Caco-2 (cell line): ENCODE measurements at regions of chr7 and their contacts with region 1.

Region 1: DNA sequence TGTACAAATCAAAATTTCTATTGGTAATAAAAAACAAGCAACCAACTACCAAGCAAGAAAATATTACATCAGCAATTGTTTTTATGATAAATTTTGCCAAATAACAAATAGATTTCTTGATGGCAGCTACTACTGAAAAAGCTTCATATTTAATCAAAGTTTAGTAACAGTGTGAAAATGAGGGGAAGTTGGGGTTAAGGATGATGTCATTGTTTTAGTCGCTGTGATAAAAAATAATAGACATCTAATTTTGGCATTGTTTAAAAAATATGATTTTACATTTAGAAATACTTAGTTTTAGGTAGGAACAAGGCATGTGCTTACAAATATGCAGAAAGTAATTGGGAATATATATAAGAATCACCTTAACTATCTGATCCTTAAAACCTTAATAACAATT is 145.9 kb downstream of the CNTNAP2 start:
- DNase-seq: no peak
- H3K4me3 ChIP-seq: no peak overlapping the region
- H3K4me3 Mint-ChIP-seq: no peak overlapping the region
- H3K27ac Mint-ChIP-seq: no peak overlapping the region
- H3K4me1 ChIP-seq: no peaks in the 10 kb centered on the region
- H3K4me1 Mint-ChIP-seq: peaks cover 6% of the 10 kb centered on the region
- H3K27me3 ChIP-seq: no peaks in the 10 kb centered on the region
- H3K27me3 Mint-ChIP-seq: peaks cover 5% of the 10 kb centered on the region
- CTCF ChIP-seq: no peak

Region 2: GRCh38 chr7:146296028-146296427 is 33.5 kb after region 1 on chr7:
- CTCF ChIA-PET with region 1: no interaction called
- POLR2A ChIA-PET with region 1: interaction called, 10 read pairs
- intact Hi-C with region 1: no loop called
- DNase-seq: no peak
- H3K4me3 ChIP-seq: no peak overlapping the region
- H3K4me3 Mint-ChIP-seq: no peak overlapping the region
- H3K27ac Mint-ChIP-seq: no peak overlapping the region
- H3K4me1 ChIP-seq: no peaks in the 10 kb centered on the region
- H3K4me1 Mint-ChIP-seq: no peaks in the 10 kb centered on the region
- H3K27me3 ChIP-seq: no peaks in the 10 kb centered on the region
- H3K27me3 Mint-ChIP-seq: peaks cover 3% of the 10 kb centered on the region
- CTCF ChIP-seq: no peak

Region 3: GRCh38 chr7:146321301-146321700 is 58.8 kb after region 1 on chr7:
- CTCF ChIA-PET with region 1: no interaction called
- POLR2A ChIA-PET with region 1: no interaction called
- intact Hi-C with region 1: no loop called
- DNase-seq: no peak
- H3K4me3 ChIP-seq: no peak overlapping the region
- H3K4me3 Mint-ChIP-seq: no peak overlapping the region
- H3K27ac Mint-ChIP-seq: no peak overlapping the region
- H3K4me1 ChIP-seq: no peaks in the 10 kb centered on the region
- H3K4me1 Mint-ChIP-seq: no peaks in the 10 kb centered on the region
- H3K27me3 ChIP-seq: no peaks in the 10 kb centered on the region
- H3K27me3 Mint-ChIP-seq: no peaks in the 10 kb centered on the region
- CTCF ChIP-seq: no peak

Region 4: DNA sequence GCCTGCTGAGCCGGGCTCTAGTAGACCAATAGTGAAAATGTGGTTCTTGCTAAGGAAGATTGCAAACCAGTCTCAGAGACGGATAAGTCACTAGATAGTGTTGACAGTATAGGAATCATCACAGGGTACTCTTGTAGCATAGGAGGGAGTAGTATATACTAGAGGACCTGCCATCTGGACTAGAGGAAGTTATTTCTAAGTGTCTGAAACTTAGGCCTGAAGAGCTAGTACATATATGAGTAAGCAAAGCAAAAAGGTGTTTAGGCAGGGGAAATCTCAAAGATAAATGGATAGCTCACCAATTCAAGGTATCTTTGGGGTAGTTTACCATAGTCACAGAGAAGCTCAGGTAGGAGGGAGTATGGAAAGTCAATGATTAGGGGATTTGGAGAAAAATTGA is 282.2 kb after region 1 on chr7:
- CTCF ChIA-PET with region 1: no interaction called
- POLR2A ChIA-PET with region 1: no interaction called
- intact Hi-C with region 1: no loop called
- DNase-seq: no peak
- H3K4me3 ChIP-seq: no peak overlapping the region
- H3K4me3 Mint-ChIP-seq: no peak overlapping the region
- H3K27ac Mint-ChIP-seq: no peak overlapping the region
- H3K4me1 ChIP-seq: no peaks in the 10 kb centered on the region
- H3K4me1 Mint-ChIP-seq: no peaks in the 10 kb centered on the region
- H3K27me3 ChIP-seq: no peaks in the 10 kb centered on the region
- H3K27me3 Mint-ChIP-seq: no peaks in the 10 kb centered on the region
- CTCF ChIP-seq: no peak

Region 5: DNA sequence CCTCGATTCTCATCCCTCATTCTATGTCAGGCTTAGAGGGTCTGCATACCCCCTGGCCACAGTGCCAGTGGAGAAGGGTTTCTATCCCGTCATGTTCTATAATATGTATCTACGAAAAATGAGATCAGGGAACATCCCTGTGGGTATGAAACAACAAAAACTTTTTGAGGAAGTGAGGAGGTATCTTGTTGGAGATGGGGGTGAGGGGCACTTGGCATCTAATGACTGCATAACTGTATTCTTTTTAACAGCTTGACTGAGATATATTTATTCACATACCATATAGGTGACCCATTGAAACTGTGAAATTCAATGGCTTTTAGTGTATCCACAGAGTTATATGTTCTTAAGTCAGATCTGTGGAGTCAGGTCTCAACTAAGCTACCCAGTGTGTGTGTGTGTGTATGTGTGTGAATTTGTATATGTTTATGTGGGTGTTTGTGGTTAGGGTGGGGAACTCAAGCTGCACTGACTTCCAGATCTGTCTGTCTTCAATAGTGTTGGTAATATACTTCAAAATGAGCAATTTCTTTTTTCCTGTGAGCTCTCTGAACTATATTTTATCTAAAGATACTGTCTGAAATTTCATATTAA is 383.0 kb after region 1 on chr7:
- CTCF ChIA-PET with region 1: no interaction called
- POLR2A ChIA-PET with region 1: no interaction called
- intact Hi-C with region 1: no loop called
- DNase-seq: no peak
- H3K4me3 ChIP-seq: no peak overlapping the region
- H3K4me3 Mint-ChIP-seq: no peak overlapping the region
- H3K27ac Mint-ChIP-seq: no peak overlapping the region
- H3K4me1 ChIP-seq: no peaks in the 10 kb centered on the region
- H3K4me1 Mint-ChIP-seq: no peaks in the 10 kb centered on the region
- H3K27me3 ChIP-seq: no peaks in the 10 kb centered on the region
- H3K27me3 Mint-ChIP-seq: no peaks in the 10 kb centered on the region
- CTCF ChIP-seq: no peak